HEK293T (cell line): ENCODE measurements at regions of chr4 and their contacts with region 1.

Region 1: GRCh38 chr4:185096032-185096653 is 46.9 kb upstream of the SLC25A4 start:
- DNase-seq: peak; percentile 18

Region 2: GRCh38 chr4:185005216-185005819 is 90.8 kb before region 1 on chr4:
- CTCF ChIA-PET with region 1: interaction called, 52 read pairs
- POLR2A ChIA-PET with region 1: no interaction called
- DNase-seq: peak; percentile 72

Region 3: GRCh38 chr4:185039508-185040273 is 56.5 kb before region 1 on chr4:
- CTCF ChIA-PET with region 1: interaction called, 40 read pairs
- POLR2A ChIA-PET with region 1: interaction called, 9 read pairs
- DNase-seq: peak; percentile 56

Region 4: DNA sequence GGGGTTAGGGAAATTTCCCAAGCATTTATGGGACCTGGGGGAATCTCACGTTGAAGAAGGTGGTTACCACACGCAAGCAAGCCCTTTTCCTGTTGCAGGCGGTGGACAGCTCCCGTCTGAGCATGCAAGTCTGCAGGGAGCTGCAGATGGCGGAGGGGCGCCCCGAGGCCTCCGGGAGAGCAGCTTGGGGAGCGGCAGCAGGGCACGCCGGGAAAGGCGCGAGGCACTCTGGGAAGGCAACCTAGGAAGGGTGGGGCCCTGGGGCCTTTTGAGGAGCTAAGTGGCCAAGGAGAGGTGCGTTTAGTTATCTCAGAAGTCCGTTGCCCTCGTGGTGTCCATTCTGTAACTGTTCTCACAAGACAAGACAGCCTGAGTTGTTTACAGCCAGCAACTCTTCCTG is 10.1 kb before region 1 on chr4:
- CTCF ChIA-PET with region 1: interaction called, 10 read pairs
- POLR2A ChIA-PET with region 1: no interaction called
- DNase-seq: no peak

Region 5: GRCh38 chr4:185115827-185116232 is 19.7 kb after region 1 on chr4:
- CTCF ChIA-PET with region 1: interaction called, 8 read pairs
- POLR2A ChIA-PET with region 1: interaction called, 11 read pairs
- DNase-seq: peak; percentile 66